Psoas muscle (tissue), 8 donors: ENCODE measurements at regions of chr15 and their contacts with region 1.

Region 1: GRCh38 chr15:82875411-82876003 is 66.1 kb downstream of the WHAMM start:
- DNase-seq: no peak
- ATAC-seq: peak; percentile 61 to 82 (median 78)
- H3K4me3 ChIP-seq: no peak overlapping the region
- H3K27ac ChIP-seq: peak overlapping the region; percentile 59
- H3K4me1 ChIP-seq: peaks cover 7% of the 10 kb centered on the region
- H3K27me3 ChIP-seq: no peaks in the 10 kb centered on the region
- CTCF ChIP-seq: no peak

Region 2: DNA sequence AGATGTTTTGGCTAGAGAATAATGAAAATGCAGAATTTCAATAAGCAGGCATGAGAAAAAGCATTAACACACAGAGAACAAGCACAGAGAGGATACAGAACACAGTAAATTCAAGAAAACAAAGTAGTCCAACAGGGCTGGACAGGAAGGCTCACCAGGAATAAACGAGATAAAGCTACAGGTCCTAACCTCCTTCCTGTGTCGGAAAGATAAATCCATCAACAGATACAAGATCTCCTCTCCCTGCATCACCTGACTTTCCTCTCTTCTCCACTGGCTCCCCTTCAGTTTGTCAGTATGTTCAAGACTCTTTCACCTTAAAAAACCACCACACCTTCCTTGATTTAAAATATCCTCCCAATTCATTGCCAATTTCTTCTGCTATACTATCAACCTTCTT is 239.7 kb before region 1 on chr15:
- intact Hi-C with region 1: no loop called
- DNase-seq: no peak
- ATAC-seq: no peak
- H3K4me3 ChIP-seq: no peak overlapping the region
- H3K27ac ChIP-seq: no peak overlapping the region
- H3K4me1 ChIP-seq: no peaks in the 10 kb centered on the region
- H3K27me3 ChIP-seq: peaks cover 0 to 33% (median 13%) of the 10 kb centered on the region in 3 donors
- CTCF ChIP-seq: no peak

Region 3: GRCh38 chr15:82971218-82971984 is 95.9 kb after region 1 on chr15:
- intact Hi-C with region 1: loop called in 1 of 2 experiments (anchors 5 kb)
- DNase-seq: no peak
- ATAC-seq: no peak
- H3K4me3 ChIP-seq: no peak overlapping the region
- H3K27ac ChIP-seq: peak overlapping the region; percentile 76
- H3K4me1 ChIP-seq: peaks cover 34% of the 10 kb centered on the region
- H3K27me3 ChIP-seq: no peaks in the 10 kb centered on the region
- CTCF ChIP-seq: no peak

Region 4: DNA sequence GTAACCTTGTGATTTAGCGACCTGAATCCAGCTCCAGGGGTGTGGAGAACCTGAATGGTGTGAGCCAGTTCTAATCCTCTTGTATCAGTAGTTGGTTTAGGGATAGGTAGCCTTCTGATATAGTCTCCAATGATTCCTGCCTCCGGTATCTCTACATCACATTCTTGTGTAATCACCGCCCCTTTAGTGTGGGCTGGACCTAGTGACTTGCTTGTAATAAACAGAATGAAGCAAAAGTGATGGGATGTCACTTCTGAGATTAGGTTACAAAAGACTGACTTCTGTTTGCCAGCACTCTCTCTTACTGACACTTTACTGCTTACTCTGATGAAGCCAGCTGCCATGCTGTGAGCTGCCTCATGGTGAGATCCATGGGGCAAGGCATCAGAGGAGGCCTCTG is 268.7 kb after region 1 on chr15:
- intact Hi-C with region 1: no loop called
- DNase-seq: no peak
- ATAC-seq: no peak
- H3K4me3 ChIP-seq: no peak overlapping the region
- H3K27ac ChIP-seq: no peak overlapping the region
- H3K4me1 ChIP-seq: no peaks in the 10 kb centered on the region
- H3K27me3 ChIP-seq: no peaks in the 10 kb centered on the region
- CTCF ChIP-seq: no peak